HepG2 (cell line): ENCODE measurements at regions of chr2 and their contacts with region 1.

Region 1: GRCh38 chr2:42974721-42975717 is 182.6 kb upstream of the HAAO start:
- DNase-seq: peak; percentile 97
- ATAC-seq: peak; percentile 60
- H3K4me3 ChIP-seq: peak overlapping the region; percentile 8 to 67 (median 42); a peak in 4 of 6 replicates
- H3K27ac ChIP-seq: peak overlapping the region; percentile 93
- H3K4me1 ChIP-seq: peaks cover 99% of the 10 kb centered on the region
- H3K27me3 ChIP-seq: no peaks in the 10 kb centered on the region
- CTCF ChIP-seq: peak; percentile 99
- EP300 ChIP-seq: peak; percentile 63 to 93; a peak in 3 of 4 replicates
- POLR2A ChIP-seq: peak in 1 of 2 experiments; percentile 63; a peak in 2 of 4 replicates
- RAD21 ChIP-seq: peak; percentile 100

Region 2: GRCh38 chr2:42810121-42810970 is 164.7 kb before region 1 on chr2:
- CTCF ChIA-PET with region 1: no interaction called
- POLR2A ChIA-PET with region 1: interaction called, 22 read pairs
- in situ Hi-C with region 1: no loop called
- intact Hi-C with region 1: no loop called
- DNase-seq: peak; percentile 94
- ATAC-seq: peak; percentile 84
- H3K4me3 ChIP-seq: peak overlapping the region; percentile 79 to 93 (median 80)
- H3K27ac ChIP-seq: peak overlapping the region; percentile 98
- H3K4me1 ChIP-seq: peaks cover 19% of the 10 kb centered on the region
- H3K27me3 ChIP-seq: no peaks in the 10 kb centered on the region; a peak in 2 of 5 replicates
- CTCF ChIP-seq: 0 out of 2 replicates have a peak, but pooled peaks have one; percentile 31
- EP300 ChIP-seq: peak; percentile 34 to 36; a peak in 2 of 4 replicates
- POLR2A ChIP-seq: peak; percentile 82 to 95
- RAD21 ChIP-seq: peak; percentile 52; the same call in 1 of the 2 replicates

Region 3: GRCh38 chr2:42844901-42845821 is 129.9 kb before region 1 on chr2:
- CTCF ChIA-PET with region 1: no interaction called
- POLR2A ChIA-PET with region 1: no interaction called
- in situ Hi-C with region 1: no loop called
- intact Hi-C with region 1: no loop called
- DNase-seq: no peak
- ATAC-seq: no peak
- H3K4me3 ChIP-seq: no peak overlapping the region
- H3K27ac ChIP-seq: no peak overlapping the region
- H3K4me1 ChIP-seq: peaks cover 44% of the 10 kb centered on the region
- H3K27me3 ChIP-seq: peaks cover 2 to 37% of the 10 kb centered on the region in 2 experiments; a peak in 4 of 5 replicates
- CTCF ChIP-seq: no peak
- EP300 ChIP-seq: no peak
- POLR2A ChIP-seq: no peak
- RAD21 ChIP-seq: no peak

Region 4: DNA sequence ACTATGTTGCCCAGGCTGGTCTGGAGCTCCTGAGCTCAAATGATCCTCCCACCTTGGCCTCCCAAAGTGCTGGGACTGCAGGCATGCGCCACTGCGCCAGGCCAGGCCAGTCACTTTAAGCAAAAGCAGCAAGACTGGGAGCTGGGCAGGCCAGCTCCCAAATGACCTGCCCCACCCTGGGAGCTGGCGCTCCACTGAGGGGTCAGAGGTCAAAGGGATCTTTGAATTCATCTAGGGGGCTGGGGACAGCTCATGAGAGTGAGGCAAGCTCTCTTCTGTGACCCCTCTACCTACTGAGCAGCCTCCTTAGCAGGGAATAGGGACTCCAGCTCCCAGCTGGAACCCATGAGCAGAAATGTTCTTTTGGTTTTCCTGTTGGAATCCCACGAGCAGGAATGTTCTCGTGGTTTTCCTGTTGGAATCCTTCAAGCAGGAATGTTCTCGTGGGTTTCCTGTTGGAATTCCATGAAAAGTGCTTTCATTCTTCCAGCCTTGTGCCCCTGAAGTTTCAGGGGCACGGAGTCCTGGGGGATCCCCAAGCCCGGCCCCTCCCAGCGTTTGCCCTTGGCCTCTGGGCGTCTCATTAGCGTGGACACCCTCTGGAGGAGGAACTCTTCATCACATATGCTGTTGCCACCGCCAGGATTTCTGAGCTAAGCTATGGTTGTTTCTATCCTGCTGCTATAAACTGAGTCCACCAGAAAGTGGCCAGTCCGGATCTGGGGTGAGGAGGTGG is 20.6 kb before region 1 on chr2:
- CTCF ChIA-PET with region 1: no interaction called
- POLR2A ChIA-PET with region 1: interaction called, 98 read pairs
- in situ Hi-C with region 1: no loop called
- intact Hi-C with region 1: loop called (anchors 2 kb)
- DNase-seq: peak; percentile 57
- ATAC-seq: peak; percentile 4; the same call in 1 of the 3 replicates
- H3K4me3 ChIP-seq: no peak overlapping the region
- H3K27ac ChIP-seq: no peak overlapping the region
- H3K4me1 ChIP-seq: peaks cover 93% of the 10 kb centered on the region
- H3K27me3 ChIP-seq: no peaks in the 10 kb centered on the region
- CTCF ChIP-seq: 0 out of 2 replicates have a peak, but pooled peaks have one; percentile 25
- EP300 ChIP-seq: no peak
- POLR2A ChIP-seq: no peak
- RAD21 ChIP-seq: no peak

Region 5: GRCh38 chr2:43005245-43005974 is 30.4 kb after region 1 on chr2:
- CTCF ChIA-PET with region 1: no interaction called
- POLR2A ChIA-PET with region 1: interaction called, 555 read pairs
- in situ Hi-C with region 1: no loop called
- intact Hi-C with region 1: loop called (anchors 1 kb)
- DNase-seq: peak; percentile 99
- ATAC-seq: peak; percentile 96
- H3K4me3 ChIP-seq: peak overlapping the region; percentile 27 to 67 (median 39); a peak in 5 of 6 replicates
- H3K27ac ChIP-seq: peak overlapping the region; percentile 75
- H3K4me1 ChIP-seq: peaks cover 85% of the 10 kb centered on the region
- H3K27me3 ChIP-seq: no peaks in the 10 kb centered on the region
- CTCF ChIP-seq: peak; percentile 54
- EP300 ChIP-seq: peak in 1 of 2 experiments; percentile 90; a peak in 2 of 4 replicates
- POLR2A ChIP-seq: peak; percentile 36 to 92; a peak in 3 of 4 replicates
- RAD21 ChIP-seq: no peak

Region 6: GRCh38 chr2:43092520-43093179 is 117.6 kb after region 1 on chr2:
- CTCF ChIA-PET with region 1: no interaction called
- POLR2A ChIA-PET with region 1: interaction called, 16 read pairs
- in situ Hi-C with region 1: no loop called
- intact Hi-C with region 1: loop called (anchors 5 kb)
- DNase-seq: peak; percentile 91
- ATAC-seq: peak; percentile 80
- H3K4me3 ChIP-seq: no peak overlapping the region; a peak in 1 of 6 replicates
- H3K27ac ChIP-seq: peak overlapping the region; percentile 24
- H3K4me1 ChIP-seq: peaks cover 49% of the 10 kb centered on the region
- H3K27me3 ChIP-seq: no peaks in the 10 kb centered on the region
- CTCF ChIP-seq: peak; percentile 52
- EP300 ChIP-seq: peak in 1 of 2 experiments; percentile 82; a peak in 2 of 4 replicates
- POLR2A ChIP-seq: no peak
- RAD21 ChIP-seq: no peak

Region 7: DNA sequence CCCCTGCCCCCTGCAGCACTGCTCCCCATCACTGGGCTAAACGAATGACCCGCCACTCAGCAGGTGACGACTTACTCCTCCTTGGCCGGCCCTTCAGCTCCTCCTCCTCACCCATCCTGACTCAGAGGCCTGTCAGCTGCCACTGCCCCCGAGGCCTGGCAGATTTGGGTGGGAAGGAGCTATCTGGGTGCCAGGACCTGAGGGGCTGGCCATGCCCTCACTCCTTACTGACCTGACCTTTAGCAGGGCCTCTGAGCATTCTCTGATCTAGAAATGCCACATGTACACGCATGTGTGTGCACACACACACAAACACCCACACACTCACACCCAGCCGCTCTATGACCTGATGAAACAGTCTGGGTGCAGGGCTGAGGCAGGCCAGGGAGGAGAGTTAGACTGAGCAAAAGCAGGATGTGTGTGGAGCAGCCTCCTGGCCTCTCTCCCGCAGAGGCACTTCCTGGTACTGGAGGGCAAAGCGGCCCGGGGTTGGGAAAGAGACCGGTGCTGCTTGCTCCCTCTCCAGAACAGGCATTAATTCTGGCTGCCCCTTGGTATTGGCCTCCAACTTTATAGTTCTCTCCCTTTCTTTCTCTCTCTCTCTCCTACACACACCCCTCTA is 183.4 kb after region 1 on chr2:
- CTCF ChIA-PET with region 1: no interaction called
- POLR2A ChIA-PET with region 1: interaction called, 24 read pairs
- in situ Hi-C with region 1: no loop called
- intact Hi-C with region 1: loop called (anchors 1 kb)
- DNase-seq: peak; percentile 74
- ATAC-seq: peak; percentile 47
- H3K4me3 ChIP-seq: peak overlapping the region; percentile 39 to 70 (median 53)
- H3K27ac ChIP-seq: peak overlapping the region; percentile 57
- H3K4me1 ChIP-seq: peaks cover 90% of the 10 kb centered on the region
- H3K27me3 ChIP-seq: no peaks in the 10 kb centered on the region
- CTCF ChIP-seq: no peak
- EP300 ChIP-seq: no peak; a peak in 1 of 4 replicates
- POLR2A ChIP-seq: peak in 1 of 2 experiments; percentile 63; a peak in 3 of 4 replicates
- RAD21 ChIP-seq: 0 out of 2 replicates have a peak, but pooled peaks have one; percentile 7

Region 8: DNA sequence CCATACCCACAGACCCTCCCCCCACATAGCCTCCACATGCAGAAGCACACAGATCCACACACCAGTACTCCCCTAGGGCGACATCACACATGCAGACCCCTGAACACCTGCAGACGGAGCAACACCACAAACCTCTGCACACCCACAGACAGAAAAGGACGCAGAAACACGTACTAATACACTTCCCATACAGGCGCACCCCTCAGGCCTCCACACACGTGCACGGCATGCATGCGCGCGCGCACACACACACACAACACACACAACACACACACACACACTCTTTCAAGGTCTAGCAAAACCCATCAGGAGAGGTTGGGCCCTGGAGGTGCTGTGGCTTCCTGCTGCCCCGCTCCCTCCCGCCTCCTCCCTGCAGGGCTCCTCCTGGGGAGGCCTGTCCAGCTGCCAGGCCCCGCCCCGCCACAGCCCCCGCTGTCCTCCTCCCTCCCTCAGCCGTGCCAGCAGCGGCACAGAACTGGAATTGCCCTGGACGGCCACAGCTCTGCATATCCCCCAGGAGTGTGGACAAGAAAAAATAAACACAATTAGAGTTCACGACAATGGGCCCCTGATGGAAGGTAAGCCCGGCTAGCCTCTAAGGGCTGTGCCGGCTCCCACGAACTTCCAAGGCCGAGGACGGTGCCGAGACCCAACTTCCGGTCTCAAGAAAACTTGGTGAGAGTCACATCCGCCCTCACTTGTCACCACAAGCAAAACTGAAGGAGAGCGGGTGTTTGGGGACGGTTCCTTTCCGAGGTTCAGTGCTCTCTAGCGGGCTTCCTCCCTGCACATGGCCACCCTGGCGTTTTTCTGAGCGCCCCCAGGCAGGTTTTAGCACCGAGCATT is 244.6 kb after region 1 on chr2:
- CTCF ChIA-PET with region 1: interaction called, 4 read pairs
- POLR2A ChIA-PET with region 1: interaction called, 275 read pairs
- in situ Hi-C with region 1: no loop called
- intact Hi-C with region 1: loop called (anchors 2 kb)
- DNase-seq: peak; percentile 87
- ATAC-seq: peak; percentile 58
- H3K4me3 ChIP-seq: peak overlapping the region; percentile 80 to 97 (median 89)
- H3K27ac ChIP-seq: peak overlapping the region; percentile 89
- H3K4me1 ChIP-seq: peaks cover 53% of the 10 kb centered on the region
- H3K27me3 ChIP-seq: no peaks in the 10 kb centered on the region; a peak in 1 of 5 replicates
- CTCF ChIP-seq: peak; percentile 22
- EP300 ChIP-seq: 0 out of 4 replicates have a peak, but pooled peaks of 1 of the 2 experiments have one; percentile 34
- POLR2A ChIP-seq: peak in 1 of 2 experiments; percentile 74; a peak in 2 of 4 replicates
- RAD21 ChIP-seq: no peak